CD4-positive, alpha-beta memory T cell (primary cell): ENCODE measurements at regions of chr20 and their contacts with region 1.

Region 1: GRCh38 chr20:39264506-39265172 is 302.5 kb downstream of the DHX35 start:
- DNase-seq: peak in 3 of 5 donors; percentile 2 to 11 (median 4)
- H3K4me3 ChIP-seq: no peak overlapping the region
- H3K4me3 Mint-ChIP-seq: no peak overlapping the region
- H3K27ac ChIP-seq: no peak overlapping the region
- H3K27ac Mint-ChIP-seq: no peak overlapping the region
- H3K4me1 ChIP-seq: no peaks in the 10 kb centered on the region
- H3K4me1 Mint-ChIP-seq: no peaks in the 10 kb centered on the region
- H3K27me3 ChIP-seq: no peaks in the 10 kb centered on the region
- H3K27me3 Mint-ChIP-seq: peaks cover 2 to 6% of the 10 kb centered on the region in 2 donors

Region 2: DNA sequence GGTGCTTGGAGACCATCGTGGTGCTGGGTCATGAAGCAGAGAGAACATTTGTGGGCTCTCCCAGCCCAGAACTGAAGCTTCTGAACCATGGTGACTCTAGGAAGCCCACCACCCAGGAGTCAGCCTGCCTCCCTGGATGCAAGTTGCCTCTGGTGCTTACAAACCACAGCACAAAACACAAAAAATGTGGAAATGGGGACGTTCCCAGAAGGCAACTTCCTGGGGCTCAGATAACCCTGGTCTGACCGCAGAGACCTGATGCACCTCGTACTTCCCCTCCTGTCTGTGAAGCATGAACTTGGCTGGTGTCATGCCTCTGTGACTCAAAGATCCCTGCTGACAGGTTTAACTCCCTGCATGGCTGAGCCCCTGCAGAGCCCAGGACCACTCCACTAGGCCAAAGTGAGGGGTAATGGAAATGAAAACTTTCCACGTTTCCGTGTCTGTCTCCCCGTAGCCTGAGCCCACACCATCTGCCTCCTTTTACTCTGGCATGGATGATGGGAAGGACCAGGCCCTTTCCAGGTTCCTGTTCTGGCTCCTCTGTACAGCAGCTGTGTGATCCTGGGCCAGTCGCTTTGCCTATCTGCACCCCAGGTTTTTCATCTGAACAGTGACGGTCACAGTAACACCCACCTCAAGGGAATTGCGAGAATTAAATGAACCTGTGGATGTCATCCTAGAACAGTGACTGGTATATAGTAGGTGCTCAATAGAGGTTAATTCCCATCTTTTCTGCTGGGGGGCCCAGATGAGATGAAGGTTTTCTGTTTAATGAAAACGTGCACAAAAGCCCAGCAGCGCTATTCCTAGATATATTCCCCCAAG is 401.4 kb before region 1 on chr20:
- CTCF ChIA-PET with region 1: no interaction called
- POLR2A ChIA-PET with region 1: no interaction called
- intact Hi-C with region 1: no loop called
- DNase-seq: peak; percentile 46 to 87 (median 51)
- H3K4me3 ChIP-seq: no peak overlapping the region
- H3K4me3 Mint-ChIP-seq: peak overlapping the region in 7 of 8 donors; percentile 13 to 77 (median 61)
- H3K27ac ChIP-seq: peak overlapping the region; percentile 61
- H3K27ac Mint-ChIP-seq: peak overlapping the region; percentile 92 to 96 (median 95)
- H3K4me1 ChIP-seq: peaks cover 59% of the 10 kb centered on the region
- H3K4me1 Mint-ChIP-seq: peaks cover 51 to 78% (median 62%) of the 10 kb centered on the region in 4 donors
- H3K27me3 ChIP-seq: no peaks in the 10 kb centered on the region
- H3K27me3 Mint-ChIP-seq: no peaks in the 10 kb centered on the region

Region 3: DNA sequence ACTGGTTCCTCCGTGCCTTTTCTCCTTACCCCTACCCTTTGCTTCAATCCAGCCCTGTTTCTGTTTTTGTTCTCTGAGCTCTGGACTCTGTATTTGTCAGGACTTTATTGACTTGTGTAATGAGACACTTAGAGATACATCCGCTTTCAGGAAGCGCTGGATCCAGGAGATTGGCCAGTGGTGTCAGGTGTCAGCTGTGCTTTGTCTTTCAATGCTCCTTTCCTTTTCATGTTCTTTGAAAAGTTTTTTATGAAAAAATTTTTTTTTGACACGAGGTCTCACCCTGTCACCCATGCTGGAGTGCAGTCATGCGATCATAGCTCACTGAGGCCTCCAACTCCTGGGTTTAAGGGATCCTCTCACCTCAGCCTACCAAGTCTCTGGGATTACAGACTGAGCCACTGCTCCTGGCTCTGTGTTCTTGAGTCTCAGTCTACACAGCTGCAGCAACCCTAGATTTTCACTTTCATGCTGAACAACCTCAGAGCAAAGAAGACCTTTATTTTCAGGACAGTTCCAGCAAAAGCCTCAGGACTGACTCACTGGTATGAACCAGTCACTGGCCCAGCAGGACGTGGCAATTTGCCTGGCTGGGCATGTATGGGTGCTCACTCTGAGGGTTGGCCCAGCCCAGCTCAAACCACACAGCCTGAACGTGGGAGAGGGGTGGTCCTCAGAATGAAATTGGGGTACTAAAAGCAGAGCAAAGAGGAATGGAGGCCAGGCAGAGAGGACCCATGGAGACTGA is 194.0 kb before region 1 on chr20:
- CTCF ChIA-PET with region 1: no interaction called
- POLR2A ChIA-PET with region 1: no interaction called
- intact Hi-C with region 1: no loop called
- DNase-seq: no peak
- H3K4me3 ChIP-seq: no peak overlapping the region
- H3K4me3 Mint-ChIP-seq: no peak overlapping the region
- H3K27ac ChIP-seq: no peak overlapping the region
- H3K27ac Mint-ChIP-seq: no peak overlapping the region
- H3K4me1 ChIP-seq: no peaks in the 10 kb centered on the region
- H3K4me1 Mint-ChIP-seq: no peaks in the 10 kb centered on the region
- H3K27me3 ChIP-seq: no peaks in the 10 kb centered on the region
- H3K27me3 Mint-ChIP-seq: peaks cover 23 to 31% of the 10 kb centered on the region in 2 donors

Region 4: GRCh38 chr20:39248171-39248861 is 16.3 kb before region 1 on chr20:
- CTCF ChIA-PET with region 1: interaction called, 11 read pairs
- POLR2A ChIA-PET with region 1: no interaction called
- intact Hi-C with region 1: no loop called
- DNase-seq: no peak
- H3K4me3 ChIP-seq: no peak overlapping the region
- H3K4me3 Mint-ChIP-seq: no peak overlapping the region
- H3K27ac ChIP-seq: no peak overlapping the region
- H3K27ac Mint-ChIP-seq: no peak overlapping the region
- H3K4me1 ChIP-seq: peaks cover 5% of the 10 kb centered on the region
- H3K4me1 Mint-ChIP-seq: peaks cover 12 to 15% (median 15%) of the 10 kb centered on the region in 4 donors
- H3K27me3 ChIP-seq: no peaks in the 10 kb centered on the region
- H3K27me3 Mint-ChIP-seq: peaks cover 0 to 2% of the 10 kb centered on the region in 2 donors